K562 (cell line): ENCODE measurements at regions of chr19 and their contacts with region 1.

Region 1: GRCh38 chr19:47112997-47113849 is at the start of gene ZC3H4:
- DNase-seq: peak; percentile 91 to 99 (median 94)
- ATAC-seq: peak; percentile 88
- H3K4me3 ChIP-seq: peak within 1 kb of the TSS; percentile 89
- H3K27ac ChIP-seq: peak within 1 kb of the TSS; percentile 96
- H3K4me1 ChIP-seq: peaks cover 14 to 20% of the 10 kb centered on the region in 2 experiments
- H3K27me3 ChIP-seq: no peaks in the 10 kb centered on the region
- CTCF ChIP-seq: no peak
- EP300 ChIP-seq: no peak
- POLR2A ChIP-seq: peak; percentile 92
- RAD21 ChIP-seq: no peak
- polyA plus RNA-seq, gene ZC3H4: 2.2 to 8.0 TPM

Region 2: DNA sequence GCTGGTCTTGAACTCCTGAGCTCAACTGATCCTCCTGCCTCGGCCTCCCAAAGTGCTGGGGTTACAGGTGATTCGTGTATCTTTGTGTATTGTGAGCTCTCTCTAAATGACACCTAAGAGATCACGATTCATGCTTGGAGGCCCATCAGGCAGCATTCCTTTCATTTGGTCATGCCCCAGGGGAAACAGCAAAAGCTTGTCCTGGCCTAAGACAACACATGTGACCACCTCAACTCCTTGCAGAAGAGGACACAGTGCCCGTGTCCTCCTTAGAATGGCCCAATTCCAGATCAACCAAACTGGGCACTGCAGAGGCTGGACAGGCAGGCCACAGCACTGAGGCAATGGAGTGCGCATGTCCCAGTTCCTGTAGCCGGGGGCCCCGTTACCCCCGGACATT is 32.1 kb before region 1 on chr19:
- CTCF ChIA-PET with region 1: no interaction called
- POLR2A ChIA-PET with region 1: interaction called, 13 read pairs
- in situ Hi-C with region 1: no loop called
- intact Hi-C with region 1: no loop called
- DNase-seq: no peak
- ATAC-seq: no peak
- H3K4me3 ChIP-seq: no peak overlapping the region
- H3K27ac ChIP-seq: no peak overlapping the region
- H3K4me1 ChIP-seq: no peaks in the 10 kb centered on the region; a peak in 1 of 5 replicates
- H3K27me3 ChIP-seq: no peaks in the 10 kb centered on the region
- CTCF ChIP-seq: no peak
- EP300 ChIP-seq: no peak
- POLR2A ChIP-seq: no peak
- RAD21 ChIP-seq: no peak

Region 3: GRCh38 chr19:47124937-47125668 is 11.9 kb after region 1 on chr19:
- CTCF ChIA-PET with region 1: interaction called, 5 read pairs
- POLR2A ChIA-PET with region 1: interaction called, 31 read pairs
- in situ Hi-C with region 1: no loop called
- intact Hi-C with region 1: loop called (anchors 2 kb)
- DNase-seq: peak; percentile 68 to 78 (median 70)
- ATAC-seq: peak; percentile 85
- H3K4me3 ChIP-seq: no peak overlapping the region
- H3K27ac ChIP-seq: no peak overlapping the region
- H3K4me1 ChIP-seq: peaks cover 0 to 10% of the 10 kb centered on the region in 2 experiments; a peak in 3 of 5 replicates
- H3K27me3 ChIP-seq: no peaks in the 10 kb centered on the region
- CTCF ChIP-seq: peak; percentile 68 to 88 (median 74)
- EP300 ChIP-seq: no peak
- POLR2A ChIP-seq: no peak
- RAD21 ChIP-seq: peak; percentile 83 to 92

Region 4: DNA sequence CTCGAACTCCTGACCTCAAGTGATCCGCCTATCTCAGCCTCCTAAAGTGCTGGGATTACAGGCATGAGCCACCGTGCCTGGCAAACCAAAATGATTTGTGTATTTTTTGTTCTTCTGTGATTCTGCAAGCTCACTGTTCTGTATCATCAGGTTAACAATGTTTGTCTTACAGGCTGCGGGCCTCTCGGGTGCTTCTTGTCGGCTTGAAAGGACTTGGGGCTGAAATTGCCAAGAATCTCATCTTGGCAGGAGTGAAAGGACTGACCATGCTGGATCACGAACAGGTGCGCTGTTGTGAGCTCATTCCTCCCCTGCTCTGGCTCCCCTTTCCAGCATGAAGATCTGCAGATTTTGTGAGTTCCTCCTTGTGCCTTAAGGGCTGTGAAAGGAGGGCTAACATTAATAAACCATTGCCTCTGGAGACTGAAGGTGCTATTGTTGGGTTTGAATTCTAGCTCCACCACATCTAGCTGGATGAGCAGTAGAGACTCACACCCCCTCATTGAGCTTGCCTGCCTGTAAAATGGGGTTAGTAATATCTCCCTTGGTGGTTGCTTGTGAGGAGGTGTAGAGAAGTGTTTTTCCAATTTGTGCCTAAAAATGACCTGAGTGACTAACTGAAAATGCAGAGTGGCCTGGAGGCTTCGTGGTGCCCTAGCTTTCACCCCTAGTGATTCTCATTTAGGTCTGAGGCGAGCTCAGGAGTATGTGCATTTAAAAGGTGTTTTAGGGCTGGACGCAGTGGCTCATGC is 30.3 kb after region 1 on chr19:
- CTCF ChIA-PET with region 1: no interaction called
- POLR2A ChIA-PET with region 1: interaction called, 10 read pairs
- in situ Hi-C with region 1: no loop called
- intact Hi-C with region 1: no loop called
- DNase-seq: no peak
- ATAC-seq: no peak
- H3K4me3 ChIP-seq: no peak overlapping the region
- H3K27ac ChIP-seq: no peak overlapping the region
- H3K4me1 ChIP-seq: peaks cover 0 to 7% of the 10 kb centered on the region in 2 experiments
- H3K27me3 ChIP-seq: no peaks in the 10 kb centered on the region
- CTCF ChIP-seq: no peak
- EP300 ChIP-seq: no peak
- POLR2A ChIP-seq: no peak
- RAD21 ChIP-seq: no peak

Region 5: DNA sequence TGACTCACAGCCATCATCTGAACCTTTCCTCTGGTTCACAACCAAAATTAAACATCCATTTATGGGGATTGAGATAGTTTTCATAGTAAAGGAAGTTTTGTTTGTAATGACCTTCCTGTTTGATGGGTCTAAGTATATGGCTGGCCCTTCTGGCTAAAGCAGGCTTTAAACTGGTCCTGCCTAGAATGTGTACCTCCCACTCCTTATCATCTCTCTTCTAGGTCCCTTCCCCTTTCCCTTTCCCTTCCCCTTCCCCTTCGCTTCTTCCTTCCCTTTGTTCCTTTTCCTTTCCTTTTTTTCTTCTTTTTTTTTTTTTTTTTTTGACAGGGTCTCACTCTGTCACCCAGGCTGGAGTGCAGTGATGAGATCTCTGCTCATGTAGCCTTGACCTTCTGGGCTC is 82.2 kb after region 1 on chr19:
- CTCF ChIA-PET with region 1: no interaction called
- POLR2A ChIA-PET with region 1: no interaction called
- in situ Hi-C with region 1: no loop called
- intact Hi-C with region 1: no loop called
- DNase-seq: no peak
- ATAC-seq: no peak; the same call in 2 of the 3 replicates
- H3K4me3 ChIP-seq: no peak overlapping the region
- H3K27ac ChIP-seq: 0 out of 3 replicates have a peak overlapping the region, but pooled peaks have one; percentile 28
- H3K4me1 ChIP-seq: no peaks in the 10 kb centered on the region; a peak in 1 of 5 replicates
- H3K27me3 ChIP-seq: no peaks in the 10 kb centered on the region
- CTCF ChIP-seq: no peak
- EP300 ChIP-seq: no peak
- POLR2A ChIP-seq: no peak
- RAD21 ChIP-seq: no peak